Activated CD4-positive, alpha-beta memory T cell treated with anti-CD3 and anti-CD28 coated beads, Interleukin-2, amount 10 ng/mL, durations not matched to agents 7 days and 5 days (primary cell): ENCODE measurements at regions of chr3 and their contacts with region 1.

Region 1: DNA sequence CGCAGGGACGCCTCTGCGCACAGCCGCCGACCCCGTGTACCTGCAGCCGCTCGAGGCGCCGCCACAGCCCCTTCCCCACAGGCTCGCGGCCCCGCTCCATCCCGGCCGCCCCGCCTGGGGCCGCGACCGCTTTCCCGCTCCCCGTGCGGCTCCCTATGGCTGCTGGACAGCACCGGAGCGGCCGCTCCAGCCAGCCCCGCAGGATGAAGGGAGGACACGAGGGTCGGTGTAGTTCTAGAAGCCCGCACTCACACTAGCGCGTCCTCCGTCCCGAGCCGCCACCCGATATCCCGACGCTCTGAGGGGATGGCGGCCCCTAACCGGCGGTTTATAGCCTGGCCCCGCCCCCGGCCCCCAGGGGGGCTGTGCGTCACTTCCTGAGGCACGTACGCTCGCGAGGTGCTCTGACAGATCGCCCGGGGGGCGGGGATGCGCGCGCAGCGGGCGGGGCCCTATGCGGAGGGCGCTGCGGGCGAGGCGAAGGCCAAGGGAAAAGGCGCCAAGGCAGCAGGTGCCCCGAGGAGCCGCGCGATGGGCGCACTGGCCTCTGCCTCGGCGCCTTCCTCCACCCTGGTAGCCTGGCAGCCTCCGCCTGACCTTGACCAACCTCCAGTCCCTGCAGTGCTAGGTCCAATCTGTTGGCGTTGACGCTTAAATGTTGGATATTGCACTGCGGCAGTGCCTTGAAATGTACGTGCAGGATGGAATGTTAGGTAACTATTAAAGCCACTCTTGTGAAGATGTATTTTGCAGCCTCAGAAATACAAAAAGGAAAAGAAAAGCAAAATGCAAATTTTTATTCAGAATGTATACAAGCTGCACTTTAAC is at the start of gene TFRC:
- DNase-seq: peak; percentile 97
- H3K4me3 Mint-ChIP-seq: peak within 1 kb of the TSS; percentile 97
- H3K27ac Mint-ChIP-seq: peak within 1 kb of the TSS; percentile 90
- H3K4me1 Mint-ChIP-seq: peaks cover 43% of the 10 kb centered on the region
- H3K27me3 Mint-ChIP-seq: no peaks in the 10 kb centered on the region
- total RNA-seq, gene TFRC: 326 to 330 TPM

Region 2: GRCh38 chr3:196192036-196192523 is 110.1 kb after region 1 on chr3:
- CTCF ChIA-PET with region 1: interaction called, 31 read pairs
- POLR2A ChIA-PET with region 1: interaction called, 237 read pairs
- DNase-seq: peak; percentile 58
- H3K4me3 Mint-ChIP-seq: peak overlapping the region; percentile 34
- H3K27ac Mint-ChIP-seq: peak overlapping the region; percentile 95
- H3K4me1 Mint-ChIP-seq: peaks cover 58% of the 10 kb centered on the region
- H3K27me3 Mint-ChIP-seq: no peaks in the 10 kb centered on the region